Activated CD8-positive, alpha-beta T cell treated with anti-CD3 and anti-CD28 coated beads for 36 hours (primary cell): ENCODE measurements at regions of chr3 and their contacts with region 1.

Region 1: DNA sequence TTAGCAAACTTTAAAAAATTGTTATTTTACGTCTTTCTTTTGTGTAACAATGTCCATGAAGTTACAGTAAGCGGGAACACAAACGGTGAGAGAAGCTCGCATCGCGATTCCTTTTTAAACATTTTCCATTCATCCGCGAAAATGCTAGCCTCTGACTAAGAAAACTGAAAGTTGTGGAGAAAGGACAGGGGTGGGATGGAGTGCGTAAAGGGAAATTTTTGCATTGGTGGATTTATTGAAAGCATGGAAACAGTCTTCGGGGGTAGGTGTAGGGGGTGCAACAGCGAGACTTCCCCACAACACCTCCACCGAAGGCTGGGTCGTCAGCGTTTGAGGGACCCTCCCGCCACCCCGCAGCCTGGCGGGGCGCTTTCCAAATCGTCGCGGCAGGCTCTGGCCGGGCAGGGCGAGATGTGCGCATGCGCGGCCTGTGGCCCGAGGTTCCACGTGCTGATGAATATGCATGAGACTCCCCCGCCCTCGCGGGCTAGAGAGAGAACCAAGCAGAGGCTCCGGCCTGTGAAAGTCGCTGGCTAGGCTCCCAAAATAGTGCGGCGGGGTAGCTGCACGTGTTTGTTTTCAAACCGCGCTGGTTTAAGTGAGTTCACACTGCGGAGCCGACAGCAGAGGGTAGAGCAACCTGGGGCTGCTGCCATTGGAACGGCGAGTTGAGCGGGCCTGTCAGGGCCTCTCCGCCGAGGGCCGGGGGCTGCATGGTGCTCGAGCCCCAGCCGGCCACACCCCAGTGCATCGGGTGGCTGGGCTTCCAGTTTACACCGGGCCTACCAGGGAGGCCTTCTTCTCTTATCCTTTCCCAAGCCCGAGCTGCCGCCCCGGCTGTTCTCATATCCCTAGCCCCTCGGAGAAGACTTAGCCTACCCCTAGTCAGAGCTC is 9.9 kb downstream of the ZIC1 start:
- DNase-seq: no peak
- ATAC-seq: no peak
- H3K4me3 Mint-ChIP-seq: no peak overlapping the region
- H3K27ac Mint-ChIP-seq: no peak overlapping the region
- H3K4me1 Mint-ChIP-seq: no peaks in the 10 kb centered on the region
- H3K27me3 Mint-ChIP-seq: peaks cover 82% of the 10 kb centered on the region
- CTCF ChIP-seq: no peak

Region 2: GRCh38 chr3:147356909-147357900 is 61.9 kb before region 1 on chr3:
- CTCF ChIA-PET with region 1: no interaction called
- POLR2A ChIA-PET with region 1: no interaction called
- intact Hi-C with region 1: loop called (anchors 10 kb)
- DNase-seq: no peak
- ATAC-seq: no peak
- H3K4me3 Mint-ChIP-seq: no peak overlapping the region
- H3K27ac Mint-ChIP-seq: no peak overlapping the region
- H3K4me1 Mint-ChIP-seq: peaks cover 2% of the 10 kb centered on the region
- H3K27me3 Mint-ChIP-seq: peaks cover 73% of the 10 kb centered on the region
- CTCF ChIP-seq: no peak

Region 3: DNA sequence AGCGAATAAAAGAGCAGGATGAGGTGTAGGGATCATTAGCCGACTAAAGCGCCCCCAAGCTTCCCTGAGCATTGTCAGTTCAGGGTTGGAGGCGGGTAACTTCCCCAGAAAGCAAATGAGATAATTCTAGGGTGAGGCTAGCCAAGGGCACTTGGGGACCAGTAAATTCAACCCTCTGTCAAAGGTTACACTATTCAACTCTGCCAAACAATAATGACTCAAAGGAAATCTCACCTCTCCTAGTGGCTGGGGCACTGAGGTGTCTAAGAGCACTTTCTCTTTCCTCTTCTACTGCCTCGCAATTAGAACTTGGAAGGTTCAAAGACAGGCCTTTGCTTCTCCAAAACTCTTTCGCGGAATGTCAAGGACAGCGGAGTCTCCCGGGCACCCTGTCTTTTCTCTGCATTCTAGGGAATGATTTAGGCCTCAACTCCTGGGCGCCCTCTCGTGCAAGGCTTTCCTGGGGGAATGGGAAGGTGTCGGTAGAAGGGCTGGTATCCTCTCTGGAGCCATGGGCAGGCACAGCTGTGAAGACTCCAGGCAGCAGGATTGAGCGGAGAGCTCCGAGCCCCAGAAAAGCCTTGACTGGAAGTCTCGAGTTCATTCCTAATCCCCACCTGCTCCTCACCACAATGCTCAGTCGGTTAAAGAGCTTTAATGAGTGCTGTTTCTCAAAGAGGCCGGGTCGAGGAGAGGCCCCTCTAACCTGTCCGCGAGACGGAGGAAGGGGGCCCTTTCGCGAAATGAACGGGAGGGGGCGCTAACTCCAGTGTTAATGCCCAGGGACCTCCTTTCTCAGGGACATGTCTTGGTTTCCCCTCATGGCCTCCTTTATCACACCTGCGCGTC is 34.6 kb before region 1 on chr3:
- CTCF ChIA-PET with region 1: no interaction called
- POLR2A ChIA-PET with region 1: no interaction called
- intact Hi-C with region 1: loop called (anchors 5 kb)
- DNase-seq: peak; percentile 27
- ATAC-seq: no peak
- H3K4me3 Mint-ChIP-seq: no peak overlapping the region
- H3K27ac Mint-ChIP-seq: no peak overlapping the region
- H3K4me1 Mint-ChIP-seq: no peaks in the 10 kb centered on the region
- H3K27me3 Mint-ChIP-seq: peaks cover 82% of the 10 kb centered on the region
- CTCF ChIP-seq: no peak